ENCODE measurements at regions of chr1 and their contacts with region 1.

Region 1: DNA sequence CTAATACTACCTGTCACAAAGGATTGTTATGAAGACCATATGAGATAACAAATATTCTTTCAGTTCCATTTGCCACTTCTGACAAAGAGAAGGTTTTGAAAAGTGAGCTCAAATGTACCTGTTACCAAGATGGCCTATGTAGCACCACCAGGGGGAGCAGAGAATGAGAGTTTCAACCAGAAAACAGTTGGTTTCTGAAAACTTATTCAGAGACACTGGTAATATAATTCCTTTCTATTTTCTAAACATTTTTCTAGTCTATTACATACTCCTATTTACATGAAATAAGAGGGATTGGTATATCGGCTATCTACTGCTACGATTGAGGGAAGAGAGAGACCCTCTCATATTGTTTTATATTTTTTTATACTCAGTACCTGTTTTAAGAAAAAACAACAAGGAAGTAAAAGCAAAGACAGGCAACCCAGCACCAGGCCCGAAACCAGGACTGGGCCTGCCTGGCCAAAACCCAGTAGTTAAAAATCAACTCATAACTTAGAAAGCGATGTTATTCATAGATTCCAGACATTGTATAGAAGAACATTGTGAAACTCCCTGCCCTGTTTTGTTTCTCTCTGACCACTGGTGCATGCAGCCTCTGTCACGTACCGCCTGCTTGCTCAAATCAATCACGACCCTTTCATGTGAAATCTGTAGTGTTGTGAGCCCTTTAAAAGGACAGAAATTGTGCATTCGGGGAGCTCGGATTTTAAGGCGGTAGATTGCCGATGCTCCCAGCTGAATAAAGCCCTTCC is 48.3 kb downstream of the IL23R start:
- DNase-seq: peak; percentile 75
- H3K4me3 Mint-ChIP-seq: no peak overlapping the region
- H3K27ac Mint-ChIP-seq: no peak overlapping the region
- H3K4me1 Mint-ChIP-seq: peaks cover 44% of the 10 kb centered on the region
- H3K27me3 Mint-ChIP-seq: no peaks in the 10 kb centered on the region

Region 2: DNA sequence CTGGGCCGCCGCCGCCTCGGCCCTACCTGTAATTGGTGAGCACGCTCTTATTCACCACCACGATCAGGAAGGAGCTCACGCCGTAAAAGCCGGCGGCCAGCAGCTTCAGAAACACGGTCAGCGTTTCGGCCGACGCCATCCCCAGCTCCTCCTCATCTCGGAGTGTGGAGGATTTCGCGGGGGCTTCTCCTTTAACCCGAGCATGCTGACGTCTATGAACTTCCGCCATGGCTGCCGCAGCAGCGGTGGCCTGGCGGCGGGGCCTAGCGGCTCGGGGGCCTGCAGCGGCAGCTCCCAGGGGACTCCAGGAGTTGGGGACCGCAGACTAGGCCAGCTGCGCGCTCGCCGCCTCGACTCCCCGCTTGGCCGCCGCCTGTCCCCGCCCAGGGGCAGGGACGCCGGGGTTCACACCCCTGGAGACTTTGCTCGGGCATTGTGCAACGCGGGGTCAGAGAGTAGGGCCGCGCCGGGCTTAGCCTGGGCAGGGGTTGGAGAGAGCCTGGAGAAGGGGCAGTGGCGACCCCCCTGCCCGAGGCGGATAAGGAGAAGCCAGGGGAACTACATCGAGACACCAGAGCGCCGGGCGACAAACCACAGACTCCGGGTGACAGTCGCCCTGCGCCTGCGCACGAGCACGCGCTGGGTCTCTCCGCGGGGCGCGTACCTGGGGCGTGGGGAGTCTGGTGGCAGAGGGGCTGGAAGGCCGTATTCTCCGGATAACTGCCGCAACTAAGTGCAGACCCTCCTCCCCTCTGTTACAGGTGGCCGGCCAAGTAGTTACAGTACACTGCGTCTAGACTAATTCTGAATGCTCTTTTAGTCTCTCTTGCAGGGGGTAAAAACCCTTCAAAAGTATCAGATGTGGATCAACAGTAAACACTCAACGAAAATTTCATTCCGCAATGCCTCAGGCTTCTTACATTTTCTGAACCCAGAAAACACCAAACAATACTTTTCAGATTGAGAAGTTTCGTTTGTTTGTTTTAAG is 160.5 kb before region 1 on chr1 and contains the start of gene SLC35D1:
- CTCF ChIA-PET with region 1: interaction called, 25 read pairs
- DNase-seq: peak; percentile 84
- H3K4me3 Mint-ChIP-seq: peak within 1 kb of the TSS; percentile 82
- H3K27ac Mint-ChIP-seq: peak within 1 kb of the TSS; percentile 92
- H3K4me1 Mint-ChIP-seq: peaks cover 31% of the 10 kb centered on the region
- H3K27me3 Mint-ChIP-seq: peaks cover 4% of the 10 kb centered on the region

Region 3: DNA sequence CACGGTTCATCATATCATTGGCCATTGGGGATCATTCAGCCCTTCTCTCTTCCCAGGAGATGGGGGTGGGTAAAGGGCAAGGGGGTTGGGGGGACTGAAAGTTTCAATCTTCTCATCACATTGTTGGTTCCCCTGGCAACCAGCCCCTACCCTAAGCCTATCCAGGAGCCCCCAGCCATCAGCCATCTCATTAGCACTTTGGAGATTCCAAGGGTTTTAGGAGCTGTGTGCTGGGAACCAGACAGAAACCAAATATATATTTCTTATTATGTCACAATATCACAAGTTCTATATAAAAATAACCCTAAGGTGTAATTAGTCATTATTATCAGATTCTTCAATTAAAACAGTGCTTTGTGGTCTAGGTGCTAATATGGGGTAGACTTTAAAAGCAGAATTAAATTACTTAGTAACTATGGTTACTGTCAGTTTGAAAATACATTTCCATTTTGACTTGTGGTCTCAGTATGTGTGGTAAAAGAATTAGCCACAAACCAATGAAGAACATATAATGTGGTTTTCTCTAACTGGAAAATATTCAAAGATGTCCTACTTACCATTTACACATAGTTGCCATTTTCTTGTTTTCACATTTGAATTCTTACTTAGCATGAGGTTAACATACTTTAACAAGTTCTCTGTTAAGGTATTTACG is 20.3 kb before region 1 on chr1:
- CTCF ChIA-PET with region 1: interaction called, 41 read pairs
- DNase-seq: no peak
- H3K4me3 Mint-ChIP-seq: no peak overlapping the region
- H3K27ac Mint-ChIP-seq: no peak overlapping the region
- H3K4me1 Mint-ChIP-seq: peaks cover 27% of the 10 kb centered on the region
- H3K27me3 Mint-ChIP-seq: no peaks in the 10 kb centered on the region

Region 4: GRCh38 chr1:67239738-67240137 is 25.1 kb after region 1 on chr1:
- CTCF ChIA-PET with region 1: interaction called, 18 read pairs
- DNase-seq: no peak
- H3K4me3 Mint-ChIP-seq: no peak overlapping the region
- H3K27ac Mint-ChIP-seq: no peak overlapping the region
- H3K4me1 Mint-ChIP-seq: no peaks in the 10 kb centered on the region
- H3K27me3 Mint-ChIP-seq: no peaks in the 10 kb centered on the region

Region 5: GRCh38 chr1:67399594-67399993 is 185.0 kb after region 1 on chr1:
- CTCF ChIA-PET with region 1: interaction called, 13 read pairs
- DNase-seq: no peak
- H3K4me3 Mint-ChIP-seq: no peak overlapping the region
- H3K27ac Mint-ChIP-seq: no peak overlapping the region
- H3K4me1 Mint-ChIP-seq: no peaks in the 10 kb centered on the region
- H3K27me3 Mint-ChIP-seq: no peaks in the 10 kb centered on the region

Region 6: DNA sequence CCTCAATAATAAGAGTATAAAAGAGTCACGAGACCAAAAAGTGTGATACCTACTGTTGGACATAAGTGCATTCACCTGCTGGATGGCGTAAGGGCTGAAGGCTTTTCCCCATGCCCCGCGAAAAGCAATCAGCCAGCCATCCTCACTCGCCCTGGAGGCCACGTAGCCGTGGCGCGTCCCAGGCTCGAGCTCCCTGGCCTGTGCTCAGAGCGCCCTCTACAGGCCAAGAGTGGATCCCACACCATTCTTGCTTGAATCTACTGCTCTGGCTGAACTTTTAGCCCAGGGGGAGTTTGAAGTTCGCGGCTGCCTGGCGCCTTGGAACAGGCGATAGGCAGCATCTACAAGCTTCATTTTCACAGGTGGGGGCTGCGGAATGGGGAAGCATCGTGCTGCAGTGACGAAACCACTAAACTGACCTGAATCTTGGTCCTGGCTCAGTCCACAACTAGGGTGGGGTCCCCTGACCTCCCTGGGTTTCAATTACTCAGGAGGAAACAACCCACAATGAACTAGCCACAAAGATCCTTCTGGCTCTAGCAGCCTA is 285.9 kb after region 1 on chr1:
- CTCF ChIA-PET with region 1: interaction called, 125 read pairs
- DNase-seq: peak; percentile 92
- H3K4me3 Mint-ChIP-seq: peak overlapping the region; percentile 18
- H3K27ac Mint-ChIP-seq: no peak overlapping the region
- H3K4me1 Mint-ChIP-seq: peaks cover 5% of the 10 kb centered on the region
- H3K27me3 Mint-ChIP-seq: peaks cover 21% of the 10 kb centered on the region